Aorta (tissue), 5 donors: ENCODE measurements at regions of chr2 and their contacts with region 1.

Region 1: GRCh38 chr2:65432227-65433190 is at the start of gene SPRED2:
- DNase-seq: peak; percentile 96 to 97
- ATAC-seq: peak; percentile 86
- H3K4me3 ChIP-seq: peak within 1 kb of the TSS; percentile 32 to 88
- H3K27ac ChIP-seq: peak within 1 kb of the TSS; percentile 34 to 89
- H3K4me1 ChIP-seq: no peaks in the 10 kb centered on the region
- H3K27me3 ChIP-seq: no peaks in the 10 kb centered on the region
- total RNA-seq, gene SPRED2: 36.5 to 38.3 TPM

Region 2: GRCh38 chr2:65227425-65228262 is 204.9 kb before region 1 on chr2 and contains the start of gene ACTR2:
- intact Hi-C with region 1: loop called in 1 of 2 experiments (anchors 2 kb)
- DNase-seq: peak; percentile 98
- ATAC-seq: peak; percentile 99
- H3K4me3 ChIP-seq: peak within 1 kb of the TSS; percentile 90 to 92
- H3K27ac ChIP-seq: peak within 1 kb of the TSS; percentile 86 to 96
- H3K4me1 ChIP-seq: peaks cover 0 to 13% of the 10 kb centered on the region in 2 donors
- H3K27me3 ChIP-seq: no peaks in the 10 kb centered on the region
- total RNA-seq, gene ACTR2: 221 to 255 TPM

Region 3: DNA sequence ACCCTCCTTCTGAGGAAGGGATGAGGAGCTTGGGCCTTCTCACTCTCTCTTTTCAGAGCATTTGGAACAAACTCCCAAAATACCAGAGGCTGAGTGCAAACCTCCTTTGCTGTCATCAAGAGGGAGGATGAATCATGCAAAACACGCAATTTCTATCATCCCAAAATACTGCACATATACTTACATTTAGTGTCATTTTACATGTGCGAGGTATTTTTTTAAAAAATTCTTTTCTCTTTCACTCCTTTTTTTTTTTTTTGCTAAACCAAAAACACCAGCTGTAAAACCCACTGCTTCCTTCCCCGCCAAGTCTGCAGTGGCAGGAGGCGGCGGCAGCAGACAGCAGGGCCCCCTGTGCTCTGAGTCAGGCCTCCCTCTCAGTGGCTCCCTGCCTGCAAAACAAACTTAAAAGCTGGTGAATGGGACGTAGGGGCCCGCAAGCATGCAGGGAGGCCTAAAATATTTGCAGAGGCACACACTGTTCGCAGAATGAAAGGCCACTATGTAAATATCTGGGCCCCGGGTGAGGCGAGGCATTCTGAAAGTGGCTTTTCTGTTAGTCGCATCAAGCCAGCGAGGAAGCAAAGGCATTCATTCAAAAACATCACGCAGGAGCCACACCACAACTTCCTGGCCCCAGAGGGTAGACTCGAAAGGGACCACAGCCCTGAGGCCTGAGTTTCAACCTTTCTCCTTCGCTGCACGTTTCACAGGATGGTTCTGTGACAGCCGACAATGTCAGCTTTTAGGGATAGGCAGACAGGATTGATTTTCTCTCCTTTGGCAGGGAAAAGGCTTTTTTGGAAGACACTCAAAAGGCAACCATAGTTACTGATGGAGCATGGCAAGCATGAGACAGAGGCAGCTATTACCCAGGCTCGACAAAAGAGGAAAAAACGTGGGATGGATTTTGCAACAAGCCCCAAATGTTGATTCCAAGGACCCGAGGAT is 131.5 kb before region 1 on chr2:
- intact Hi-C with region 1: loop called (anchors 2 to 5 kb)
- DNase-seq: peak; percentile 77
- ATAC-seq: peak; percentile 82
- H3K4me3 ChIP-seq: no peak overlapping the region
- H3K27ac ChIP-seq: peak overlapping the region in 1 of 2 donors; percentile 81
- H3K4me1 ChIP-seq: peaks cover 0 to 7% of the 10 kb centered on the region in 2 donors
- H3K27me3 ChIP-seq: no peaks in the 10 kb centered on the region

Region 4: DNA sequence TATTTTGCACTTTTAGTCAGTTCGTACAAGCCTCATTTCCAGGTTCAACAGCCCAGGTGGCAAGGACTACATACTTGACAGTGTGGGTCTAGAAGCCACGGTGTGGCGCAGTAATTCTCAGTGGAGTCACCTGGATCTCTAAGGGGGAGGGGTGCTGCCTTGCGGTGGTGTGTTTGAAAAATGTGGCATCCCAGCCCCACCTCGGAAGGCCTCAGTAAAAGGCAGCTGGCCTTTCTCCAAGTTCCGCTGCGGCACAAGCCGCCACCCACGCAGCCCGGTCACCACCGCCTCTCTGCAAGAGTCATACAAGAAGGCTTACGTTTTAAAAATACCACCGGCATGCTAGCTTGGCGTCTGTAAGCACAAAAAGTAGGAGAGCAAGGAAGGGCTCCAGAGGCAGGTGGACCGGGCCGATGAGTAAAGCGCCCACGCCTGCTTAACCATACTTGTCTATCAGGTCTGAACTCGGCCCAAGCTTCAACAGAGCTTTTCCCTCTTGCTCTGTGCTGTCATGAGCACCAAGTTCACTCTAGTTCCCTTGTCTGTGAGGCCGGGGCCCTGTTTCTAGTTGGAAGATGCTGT is 49.6 kb before region 1 on chr2:
- intact Hi-C with region 1: loop called in 1 of 2 experiments (anchors 5 kb)
- DNase-seq: peak; percentile 89 to 94
- ATAC-seq: peak; percentile 50
- H3K4me3 ChIP-seq: no peak overlapping the region
- H3K27ac ChIP-seq: no peak overlapping the region
- H3K4me1 ChIP-seq: peaks cover 0 to 7% of the 10 kb centered on the region in 2 donors
- H3K27me3 ChIP-seq: no peaks in the 10 kb centered on the region

Region 5: GRCh38 chr2:65396348-65397026 is 36.0 kb before region 1 on chr2:
- intact Hi-C with region 1: no loop called
- DNase-seq: no peak
- ATAC-seq: peak; percentile 74
- H3K4me3 ChIP-seq: no peak overlapping the region
- H3K27ac ChIP-seq: peak overlapping the region; percentile 36 to 72
- H3K4me1 ChIP-seq: peaks cover 2 to 18% of the 10 kb centered on the region in 2 donors
- H3K27me3 ChIP-seq: no peaks in the 10 kb centered on the region